Left cardiac atrium (tissue), 4 donors: ENCODE measurements at regions of chr4 and their contacts with region 1.

Region 1: DNA sequence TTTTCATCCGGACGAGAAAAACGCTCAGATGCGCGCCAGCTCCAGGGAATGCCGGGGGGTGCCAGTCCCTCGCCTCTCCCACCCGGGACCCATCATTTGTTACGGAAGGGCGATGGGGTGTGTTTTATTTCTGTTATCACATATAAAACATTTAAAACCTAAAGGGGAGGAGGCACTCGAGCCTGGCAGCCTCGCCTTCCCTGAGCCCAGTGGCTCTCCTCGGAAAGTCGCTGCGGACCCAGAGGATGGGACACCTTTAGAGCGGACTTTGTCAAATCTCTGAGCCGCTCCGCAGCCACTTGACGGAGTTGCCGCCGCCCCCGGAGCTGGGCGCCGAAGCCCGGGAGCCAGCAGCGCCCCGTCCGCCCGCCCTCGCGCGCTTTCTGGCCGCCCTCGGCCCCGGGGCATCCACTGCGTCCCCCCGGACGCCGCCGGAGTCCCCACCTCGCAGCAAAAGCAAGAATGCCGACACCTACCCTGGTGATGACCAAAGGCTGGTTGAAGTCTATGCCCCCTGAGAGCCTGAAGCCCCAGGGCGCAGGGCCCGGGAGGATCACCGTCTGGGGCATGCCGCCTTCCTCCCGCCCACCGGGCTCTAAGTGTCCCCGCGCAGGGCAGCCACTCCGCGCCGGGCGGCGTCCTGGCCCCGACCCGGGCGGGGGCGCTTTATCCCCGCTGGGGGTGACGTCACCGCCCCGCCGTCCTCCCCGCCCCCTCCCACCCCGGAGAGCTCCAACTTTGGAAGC is at the start of gene PDLIM3:
- DNase-seq: peak; percentile 86
- ATAC-seq: peak; percentile 88 to 90
- total RNA-seq, gene PDLIM3: 319 to 692 TPM

Region 2: DNA sequence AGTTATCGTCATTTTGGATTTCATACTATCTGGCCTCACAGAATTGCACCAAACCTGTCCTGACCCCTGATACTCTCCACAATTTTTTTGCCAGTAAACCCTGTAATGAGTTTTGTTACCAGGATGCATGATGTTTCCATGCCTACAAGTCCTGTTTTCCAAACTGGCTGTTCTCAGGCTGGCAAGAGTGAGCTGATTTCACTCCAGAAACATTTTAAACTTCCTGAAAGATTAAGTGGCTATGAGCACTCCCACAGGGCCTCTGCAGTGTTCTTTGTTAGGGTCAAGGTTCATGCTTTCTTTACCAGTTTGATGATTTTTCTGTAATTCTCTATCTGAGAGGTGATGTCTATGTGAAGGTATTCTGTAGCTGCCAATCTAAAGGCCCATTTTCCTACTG is 31.9 kb after region 1 on chr4:
- intact Hi-C with region 1: loop called in 1 of 2 experiments (anchors 2 kb)
- DNase-seq: peak; percentile 61
- ATAC-seq: peak; percentile 74 to 87

Region 3: GRCh38 chr4:186137196-186137794 is 602.3 kb after region 1 on chr4:
- intact Hi-C with region 1: no loop called
- DNase-seq: no peak
- ATAC-seq: no peak

Region 4: DNA sequence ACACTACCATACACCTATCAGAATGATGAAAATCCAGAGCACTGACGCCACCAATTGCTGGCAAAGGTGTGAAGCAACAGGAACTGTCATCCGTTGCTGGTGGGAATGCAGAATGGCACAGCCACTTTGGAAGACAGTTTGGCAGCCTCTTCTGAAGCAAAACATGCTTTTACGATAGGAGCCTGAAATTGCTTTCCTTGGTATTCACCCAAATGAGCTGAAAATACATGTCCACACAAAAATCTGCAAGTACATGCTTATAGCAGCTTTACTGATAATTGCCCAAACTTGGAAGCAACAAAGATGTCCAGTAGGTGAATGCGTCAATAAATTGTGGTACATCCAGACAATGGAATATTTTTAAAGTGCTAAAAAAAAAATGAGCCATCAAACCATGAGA is 1511.4 kb after region 1 on chr4:
- intact Hi-C with region 1: no loop called
- DNase-seq: no peak
- ATAC-seq: no peak